Naive thymus-derived CD4-positive, alpha-beta T cell (primary cell): ENCODE measurements at regions of chr9 and their contacts with region 1.

Region 1: GRCh38 chr9:122904823-122905710 is at the start of gene RC3H2:
- DNase-seq: peak; percentile 80 to 99 (median 97)
- ATAC-seq: peak; percentile 94
- H3K4me3 ChIP-seq: peak within 1 kb of the TSS; percentile 74
- H3K4me3 Mint-ChIP-seq: peak within 1 kb of the TSS; percentile 89 to 96 (median 93)
- H3K27ac ChIP-seq: peak within 1 kb of the TSS; percentile 100
- H3K27ac Mint-ChIP-seq: peak within 1 kb of the TSS; percentile 93 to 98 (median 95)
- H3K4me1 ChIP-seq: peaks cover 14 to 21% of the 10 kb centered on the region in 2 donors
- H3K4me1 Mint-ChIP-seq: peaks cover 11 to 47% (median 40%) of the 10 kb centered on the region in 7 donors
- H3K27me3 ChIP-seq: no peaks in the 10 kb centered on the region
- H3K27me3 Mint-ChIP-seq: peaks cover 0 to 3% (median 0%) of the 10 kb centered on the region in 5 donors
- total RNA-seq, gene RC3H2: 52.3 to 66.4 (median 57.0) TPM

Region 2: DNA sequence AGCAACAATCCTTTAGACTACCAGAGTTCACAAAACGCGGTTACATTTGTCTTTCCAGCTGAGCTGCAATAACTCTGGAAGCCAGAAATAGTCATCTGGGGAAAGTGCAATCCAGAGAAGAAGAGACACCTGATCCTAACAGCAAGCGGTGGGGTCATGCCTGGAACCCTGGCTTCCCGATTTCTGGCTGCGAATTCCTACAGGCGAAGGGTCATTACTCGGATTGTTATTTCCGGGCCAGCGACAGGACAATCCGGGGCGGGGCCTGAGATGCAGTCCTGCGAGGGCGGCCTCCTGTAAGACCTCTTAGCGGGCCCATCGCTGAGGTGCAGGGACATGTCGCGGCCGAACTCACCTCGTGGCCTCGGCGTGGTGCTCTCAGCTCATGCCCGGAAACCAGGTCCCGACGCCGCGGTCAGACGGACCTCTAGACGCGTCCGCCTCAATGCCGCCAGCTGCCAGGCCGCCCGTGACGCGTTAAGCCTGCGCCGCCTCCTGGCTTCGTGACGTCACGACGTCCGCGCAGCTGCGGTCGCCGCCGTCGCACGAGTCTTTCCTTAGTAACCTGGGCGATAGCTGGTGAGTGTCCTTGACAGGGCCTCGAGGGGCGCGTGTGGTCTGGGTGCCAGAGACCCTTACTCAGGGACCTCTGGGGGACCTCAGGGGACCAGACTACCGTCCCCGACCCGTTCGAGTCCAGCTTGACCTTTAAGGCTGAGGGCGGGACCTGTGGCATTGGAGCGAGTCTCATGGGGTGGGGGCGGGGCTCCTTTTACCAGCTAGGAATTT is 640.5 kb before region 1 on chr9 and contains the starts of genes MRRF and RBM18:
- CTCF ChIA-PET with region 1: no interaction called
- POLR2A ChIA-PET with region 1: no interaction called
- intact Hi-C with region 1: loop called (anchors 1 to 2 kb)
- DNase-seq: peak; percentile 80 to 93 (median 88)
- ATAC-seq: peak; percentile 92
- H3K4me3 ChIP-seq: peak within 1 kb of the TSS; percentile 93
- H3K4me3 Mint-ChIP-seq: peak within 1 kb of the TSS; percentile 88 to 100 (median 98)
- H3K27ac ChIP-seq: peak within 1 kb of the TSS; percentile 94
- H3K27ac Mint-ChIP-seq: peak within 1 kb of the TSS; percentile 76 to 100 (median 99)
- H3K4me1 ChIP-seq: peaks cover 18 to 25% of the 10 kb centered on the region in 2 donors
- H3K4me1 Mint-ChIP-seq: peaks cover 40 to 71% (median 61%) of the 10 kb centered on the region in 7 donors
- H3K27me3 ChIP-seq: no peaks in the 10 kb centered on the region
- H3K27me3 Mint-ChIP-seq: peaks cover 0 to 2% (median 0%) of the 10 kb centered on the region in 5 donors
- total RNA-seq, gene MRRF: 28.1 to 35.8 (median 33.3) TPM
- total RNA-seq, gene RBM18: 14.2 to 22.9 (median 15.8) TPM

Region 3: DNA sequence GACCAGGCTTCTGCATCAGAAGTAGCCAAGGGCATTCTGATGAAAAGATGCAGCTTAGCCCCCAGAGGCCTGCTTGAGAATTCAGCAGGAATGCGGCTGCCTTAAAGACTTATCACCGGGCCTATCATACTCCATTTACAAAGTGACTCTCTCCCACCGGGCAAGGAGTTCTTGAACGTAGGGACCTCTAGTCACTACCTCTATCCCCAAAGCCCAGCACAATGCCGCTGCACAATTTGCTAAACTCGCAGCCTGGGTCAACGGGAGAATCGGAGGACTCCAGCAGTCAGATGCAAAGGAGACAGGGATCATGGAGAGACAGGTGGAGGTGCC is 77.3 kb before region 1 on chr9:
- CTCF ChIA-PET with region 1: no interaction called
- POLR2A ChIA-PET with region 1: interaction called, 16 read pairs
- intact Hi-C with region 1: loop called (anchors 1 kb)
- DNase-seq: peak in 1 of 9 donors; percentile 11
- ATAC-seq: no peak
- H3K4me3 ChIP-seq: peak overlapping the region; percentile 97
- H3K4me3 Mint-ChIP-seq: peak overlapping the region; percentile 97 to 100 (median 99)
- H3K27ac ChIP-seq: peak overlapping the region; percentile 99
- H3K27ac Mint-ChIP-seq: peak overlapping the region; percentile 92 to 98 (median 98)
- H3K4me1 ChIP-seq: peaks cover 9 to 11% of the 10 kb centered on the region in 2 donors
- H3K4me1 Mint-ChIP-seq: peaks cover 23 to 51% (median 42%) of the 10 kb centered on the region in 7 donors
- H3K27me3 ChIP-seq: no peaks in the 10 kb centered on the region
- H3K27me3 Mint-ChIP-seq: no peaks in the 10 kb centered on the region

Region 4: DNA sequence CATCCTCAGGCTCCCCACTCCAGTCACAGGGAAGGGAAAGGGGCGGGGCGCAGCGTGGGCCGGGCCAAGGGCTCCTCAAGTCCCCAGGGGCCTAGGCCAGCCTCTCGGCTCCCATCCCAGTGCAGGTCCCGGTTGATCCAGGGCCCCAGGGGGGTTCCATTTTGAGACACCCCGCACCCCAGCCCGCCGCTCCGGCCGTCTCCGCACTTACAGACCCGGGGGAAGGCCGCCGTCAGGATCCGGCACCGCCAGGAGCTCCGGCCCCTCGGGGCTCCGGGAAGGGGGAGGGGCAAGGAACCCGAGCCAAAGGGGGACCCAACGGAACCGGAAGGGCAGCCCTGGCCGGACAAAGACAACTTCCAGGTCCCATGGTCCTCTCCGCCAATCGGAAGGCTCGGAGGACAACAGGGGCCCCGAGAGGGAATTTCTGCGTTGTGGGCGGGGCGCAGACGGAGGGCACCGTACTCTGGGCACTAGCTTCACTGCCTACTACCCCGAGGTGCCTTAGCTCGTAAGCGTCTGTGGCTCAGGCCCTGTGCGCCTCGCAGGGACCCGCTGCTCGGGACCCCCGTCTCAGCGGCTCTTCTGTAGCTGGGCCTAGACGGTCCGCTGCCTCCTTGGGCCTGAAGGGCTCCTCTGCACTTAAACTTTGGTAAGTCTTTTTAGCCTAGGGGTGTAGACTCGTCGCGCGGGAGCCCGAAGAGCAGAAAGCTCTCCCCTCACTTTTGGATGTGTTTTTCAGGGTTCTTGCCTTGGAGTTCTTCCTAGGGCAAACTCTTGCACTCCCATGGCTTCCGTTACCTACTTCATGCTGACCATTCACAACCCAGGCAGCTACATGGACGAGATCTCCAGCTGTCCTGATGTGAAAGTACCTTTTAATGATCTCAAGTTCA is 26.4 kb after region 1 on chr9 and contains the start of gene ZBTB26:
- CTCF ChIA-PET with region 1: interaction called, 3 read pairs
- POLR2A ChIA-PET with region 1: interaction called, 29 read pairs
- intact Hi-C with region 1: loop called (anchors 1 kb)
- DNase-seq: peak; percentile 74 to 90 (median 80)
- ATAC-seq: peak; percentile 99
- H3K4me3 ChIP-seq: peak within 1 kb of the TSS; percentile 75
- H3K4me3 Mint-ChIP-seq: peak within 1 kb of the TSS in 1 of 10 donors; percentile 99
- H3K27ac ChIP-seq: peak within 1 kb of the TSS; percentile 94
- H3K27ac Mint-ChIP-seq: peak within 1 kb of the TSS in 5 of 9 donors; percentile 86 to 97 (median 97)
- H3K4me1 ChIP-seq: peaks cover 8 to 11% of the 10 kb centered on the region in 2 donors
- H3K4me1 Mint-ChIP-seq: peaks cover 20 to 39% (median 30%) of the 10 kb centered on the region in 7 donors
- H3K27me3 ChIP-seq: no peaks in the 10 kb centered on the region
- H3K27me3 Mint-ChIP-seq: no peaks in the 10 kb centered on the region
- total RNA-seq, gene ZBTB26: 4.6 to 11.0 (median 8.6) TPM

Region 5: DNA sequence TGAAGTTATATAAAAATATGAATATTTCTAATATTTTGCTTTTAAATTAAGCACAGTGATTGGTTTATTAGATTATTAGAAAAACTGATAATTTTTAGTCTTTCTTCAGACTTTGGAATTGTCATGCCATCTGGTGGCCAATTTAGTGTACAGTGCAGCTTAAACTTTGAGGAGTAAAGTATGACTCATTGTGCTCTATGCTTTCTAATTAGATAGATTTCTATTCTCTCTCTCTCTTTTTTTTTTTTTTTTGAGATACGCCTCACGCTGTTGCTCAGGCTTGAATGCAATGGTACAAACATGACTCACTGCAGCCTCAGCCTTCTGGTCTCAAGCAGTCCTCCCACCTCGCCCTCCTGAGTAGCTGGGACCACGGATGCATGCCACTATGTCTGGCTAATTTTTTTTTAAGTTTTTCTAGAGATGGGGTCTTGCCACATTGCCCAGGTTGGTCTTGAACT is 86.3 kb after region 1 on chr9:
- CTCF ChIA-PET with region 1: no interaction called
- POLR2A ChIA-PET with region 1: no interaction called
- intact Hi-C with region 1: loop called in 1 of 2 experiments (anchors 2 kb)
- DNase-seq: peak in 8 of 9 donors; percentile 1 to 37 (median 14)
- ATAC-seq: peak; percentile 81
- H3K4me3 ChIP-seq: no peak overlapping the region
- H3K4me3 Mint-ChIP-seq: no peak overlapping the region
- H3K27ac ChIP-seq: no peak overlapping the region
- H3K27ac Mint-ChIP-seq: no peak overlapping the region
- H3K4me1 ChIP-seq: no peaks in the 10 kb centered on the region
- H3K4me1 Mint-ChIP-seq: peaks cover 0 to 6% (median 4%) of the 10 kb centered on the region in 7 donors
- H3K27me3 ChIP-seq: no peaks in the 10 kb centered on the region
- H3K27me3 Mint-ChIP-seq: no peaks in the 10 kb centered on the region

Region 6: DNA sequence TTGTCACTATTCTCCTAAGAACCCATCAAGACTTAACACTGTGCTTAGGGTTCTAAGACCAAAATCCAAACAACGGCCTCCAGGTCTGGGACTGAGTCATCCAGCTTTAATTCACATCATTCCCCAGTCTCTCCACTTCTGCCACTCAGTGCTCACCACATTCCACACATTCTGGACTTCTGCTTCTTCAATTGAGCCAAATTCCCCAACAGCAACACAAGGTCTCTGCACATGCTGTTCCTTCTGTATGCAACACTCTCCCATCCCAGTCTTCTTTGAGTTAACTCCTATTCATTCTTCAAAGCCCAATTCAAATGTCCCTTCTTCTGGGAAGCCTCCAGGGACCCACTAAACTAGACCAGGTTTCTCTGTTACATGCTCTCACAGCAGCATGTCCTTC is 226.2 kb after region 1 on chr9:
- CTCF ChIA-PET with region 1: no interaction called
- POLR2A ChIA-PET with region 1: no interaction called
- intact Hi-C with region 1: no loop called
- DNase-seq: no peak
- ATAC-seq: no peak
- H3K4me3 ChIP-seq: no peak overlapping the region
- H3K4me3 Mint-ChIP-seq: no peak overlapping the region
- H3K27ac ChIP-seq: no peak overlapping the region
- H3K27ac Mint-ChIP-seq: no peak overlapping the region
- H3K4me1 ChIP-seq: no peaks in the 10 kb centered on the region
- H3K4me1 Mint-ChIP-seq: peaks cover 0 to 5% (median 0%) of the 10 kb centered on the region in 7 donors
- H3K27me3 ChIP-seq: no peaks in the 10 kb centered on the region
- H3K27me3 Mint-ChIP-seq: no peaks in the 10 kb centered on the region

Region 7: GRCh38 chr9:124861342-124862229 is 1956.5 kb after region 1 on chr9 and contains the starts of genes ARPC5L and RPL35:
- CTCF ChIA-PET with region 1: no interaction called
- POLR2A ChIA-PET with region 1: no interaction called
- intact Hi-C with region 1: loop called in 1 of 2 experiments (anchors 5 kb)
- DNase-seq: peak; percentile 91 to 97 (median 95)
- ATAC-seq: peak; percentile 98
- H3K4me3 ChIP-seq: peak within 1 kb of the TSS; percentile 88
- H3K4me3 Mint-ChIP-seq: peak within 1 kb of the TSS; percentile 89 to 99 (median 95)
- H3K27ac ChIP-seq: peak within 1 kb of the TSS; percentile 87
- H3K27ac Mint-ChIP-seq: peak within 1 kb of the TSS; percentile 91 to 99 (median 96)
- H3K4me1 ChIP-seq: peaks cover 7 to 16% of the 10 kb centered on the region in 2 donors
- H3K4me1 Mint-ChIP-seq: peaks cover 7 to 36% (median 29%) of the 10 kb centered on the region in 7 donors
- H3K27me3 ChIP-seq: no peaks in the 10 kb centered on the region
- H3K27me3 Mint-ChIP-seq: no peaks in the 10 kb centered on the region
- total RNA-seq, gene ARPC5L: 20.0 to 66.1 (median 33.1) TPM
- total RNA-seq, gene RPL35: 1,415 to 1,987 (median 1,778) TPM